Activated CD4-positive, alpha-beta T cell treated with anti-CD3 and anti-CD28 coated beads, Interleukin-2, amount 10 ng/mL, durations not matched to agents 7 days and 5 days (primary cell): ENCODE measurements at regions of chr12 and their contacts with region 1.

Region 1: GRCh38 chr12:56987551-56988053 is 18.7 kb downstream of the ZBTB39 start:
- DNase-seq: peak; percentile 73
- H3K4me3 Mint-ChIP-seq: no peak overlapping the region
- H3K27ac Mint-ChIP-seq: no peak overlapping the region
- H3K4me1 Mint-ChIP-seq: peaks cover 19% of the 10 kb centered on the region
- H3K27me3 Mint-ChIP-seq: peaks cover 13% of the 10 kb centered on the region

Region 2: DNA sequence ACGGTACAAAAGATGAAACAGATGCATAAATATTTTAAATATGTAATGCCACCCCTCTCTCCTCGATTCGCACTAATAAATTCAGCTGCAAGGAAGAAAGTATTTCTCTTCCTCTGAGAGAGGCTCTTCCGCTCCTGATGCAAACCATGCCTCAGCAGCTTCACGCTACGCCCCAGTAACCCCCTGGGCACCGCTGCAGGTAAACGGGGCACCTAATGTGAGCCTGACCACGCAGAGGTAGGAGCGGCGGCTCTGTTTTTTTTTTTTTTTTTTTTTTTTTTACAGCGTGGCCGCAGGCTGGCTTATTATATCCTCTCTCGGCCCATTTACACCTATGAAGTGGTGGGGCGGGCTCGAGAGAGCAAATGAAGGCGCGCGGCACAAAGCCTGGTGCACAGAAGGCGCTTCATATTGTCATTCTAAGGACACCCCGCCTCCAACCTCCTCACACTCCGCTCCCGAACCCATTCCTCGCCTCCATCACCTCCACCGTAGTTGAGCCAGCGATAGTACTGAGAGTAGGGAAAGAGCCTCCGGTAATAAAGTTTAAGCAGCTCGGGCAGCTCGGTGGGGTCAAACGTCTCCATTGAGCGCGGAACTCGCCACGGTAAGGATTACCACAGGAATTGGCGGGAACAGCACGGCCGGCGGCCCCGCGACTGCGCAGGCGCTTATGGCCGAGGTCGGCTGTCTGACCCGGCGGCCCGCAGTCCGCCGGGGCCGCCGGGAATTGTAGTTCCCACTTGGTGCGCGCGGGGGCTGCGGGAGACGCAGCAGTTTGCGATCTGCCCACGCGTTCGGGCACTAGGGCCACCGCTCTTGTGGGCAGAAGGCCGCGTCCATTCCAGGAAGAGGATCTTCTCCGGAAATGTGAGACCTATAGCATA is 235.6 kb before region 1 on chr12 and contains the start of gene PRIM1:
- CTCF ChIA-PET with region 1: interaction called, 12 read pairs
- POLR2A ChIA-PET with region 1: no interaction called
- DNase-seq: peak; percentile 88
- H3K4me3 Mint-ChIP-seq: peak within 1 kb of the TSS; percentile 98
- H3K27ac Mint-ChIP-seq: peak within 1 kb of the TSS; percentile 99
- H3K4me1 Mint-ChIP-seq: peaks cover 54% of the 10 kb centered on the region
- H3K27me3 Mint-ChIP-seq: no peaks in the 10 kb centered on the region
- total RNA-seq, gene PRIM1: 48.0 to 52.9 TPM

Region 3: DNA sequence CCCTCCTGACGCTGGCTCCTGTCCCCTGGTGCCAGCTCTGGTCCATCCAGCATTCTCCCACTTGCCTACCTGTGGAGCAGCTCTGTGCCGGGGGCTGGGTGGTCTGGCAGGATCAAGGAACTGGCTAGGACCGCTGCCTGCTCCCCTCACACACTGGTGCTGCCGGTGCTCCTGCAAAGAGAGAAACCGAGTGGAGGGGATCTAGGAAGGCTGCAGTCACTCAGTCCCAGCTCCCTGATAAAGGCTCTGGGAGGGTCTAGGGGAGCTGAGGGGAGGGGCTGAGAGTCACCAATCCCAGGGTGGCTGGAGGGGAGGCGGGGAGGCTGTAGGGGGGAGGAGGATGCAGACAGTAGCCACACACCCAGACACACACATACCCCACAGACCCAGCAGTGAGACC is 28.7 kb after region 1 on chr12 and contains the start of gene TAC3:
- CTCF ChIA-PET with region 1: no interaction called
- POLR2A ChIA-PET with region 1: no interaction called
- DNase-seq: no peak
- H3K4me3 Mint-ChIP-seq: no peak within 1 kb of the TSS
- H3K27ac Mint-ChIP-seq: no peak within 1 kb of the TSS
- H3K4me1 Mint-ChIP-seq: peaks cover 31% of the 10 kb centered on the region
- H3K27me3 Mint-ChIP-seq: peaks cover 17% of the 10 kb centered on the region
- total RNA-seq, gene TAC3: 0.25 TPM in 1 of 2 experiments, not detected in the other